ENCODE measurements at regions of chr20 and their contacts with region 1.

Region 1: DNA sequence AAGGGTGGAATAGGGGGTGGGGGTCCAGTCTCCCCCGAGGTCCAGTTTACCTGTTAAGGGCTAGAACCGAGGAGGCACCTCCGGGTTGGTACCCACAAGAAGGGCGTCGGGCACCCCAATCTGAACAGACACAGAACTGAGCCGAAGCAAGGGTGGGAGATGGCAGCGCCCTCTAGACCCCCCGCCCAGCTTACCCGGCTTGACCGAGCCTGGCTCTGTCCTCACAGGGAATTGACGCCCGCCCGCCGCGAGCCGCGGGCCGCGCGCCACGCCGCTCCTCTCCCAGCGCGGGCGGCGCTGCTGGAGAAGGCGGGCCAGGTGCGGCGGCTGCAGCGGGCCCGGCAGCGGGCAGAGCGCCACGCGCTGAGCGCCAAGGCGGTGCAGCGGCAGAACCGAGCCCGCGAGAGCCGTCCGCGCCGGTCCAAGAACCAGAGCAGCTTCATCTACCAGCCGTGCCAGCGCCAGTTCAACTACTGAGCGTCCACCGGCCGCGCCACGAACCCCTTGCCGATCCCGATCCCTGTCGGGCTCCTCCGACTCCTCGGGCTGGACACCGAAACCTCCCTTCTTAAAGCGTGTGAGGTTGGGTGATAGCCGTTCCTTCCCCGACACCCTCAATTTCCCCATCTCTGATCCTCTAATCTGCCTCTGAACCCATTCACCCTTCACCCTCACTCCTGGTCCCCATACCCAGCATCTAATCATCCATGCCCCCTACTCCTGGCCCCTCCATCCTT is 5.9 kb downstream of the TP53INP2 start:
- DNase-seq: peak; percentile 51
- ATAC-seq: peak; percentile 48
- H3K4me3 ChIP-seq: peak overlapping the region; percentile 57
- H3K27ac ChIP-seq: peak overlapping the region; percentile 24
- H3K4me1 ChIP-seq: peaks cover 22% of the 10 kb centered on the region
- H3K27me3 ChIP-seq: no peaks in the 10 kb centered on the region
- CTCF ChIP-seq: peak; percentile 33
- POLR2A ChIP-seq: no peak
- RAD21 ChIP-seq: no peak

Region 2: GRCh38 chr20:34302723-34303528 is 407.1 kb before region 1 on chr20 and contains the start of gene AHCY:
- CTCF ChIA-PET with region 1: no interaction called
- POLR2A ChIA-PET with region 1: no interaction called
- dilution Hi-C with region 1: no loop called
- in situ Hi-C with region 1: loop called (anchors 10 kb)
- intact Hi-C with region 1: no loop called
- DNase-seq: peak; percentile 95
- ATAC-seq: peak; percentile 95
- H3K4me3 ChIP-seq: peak within 1 kb of the TSS; percentile 76
- H3K27ac ChIP-seq: peak within 1 kb of the TSS; percentile 80
- H3K4me1 ChIP-seq: peaks cover 9% of the 10 kb centered on the region
- H3K27me3 ChIP-seq: no peaks in the 10 kb centered on the region
- CTCF ChIP-seq: no peak
- POLR2A ChIP-seq: no peak
- RAD21 ChIP-seq: no peak
- total RNA-seq, gene AHCY: 194 and 210 TPM in 2 replicates

Region 3: DNA sequence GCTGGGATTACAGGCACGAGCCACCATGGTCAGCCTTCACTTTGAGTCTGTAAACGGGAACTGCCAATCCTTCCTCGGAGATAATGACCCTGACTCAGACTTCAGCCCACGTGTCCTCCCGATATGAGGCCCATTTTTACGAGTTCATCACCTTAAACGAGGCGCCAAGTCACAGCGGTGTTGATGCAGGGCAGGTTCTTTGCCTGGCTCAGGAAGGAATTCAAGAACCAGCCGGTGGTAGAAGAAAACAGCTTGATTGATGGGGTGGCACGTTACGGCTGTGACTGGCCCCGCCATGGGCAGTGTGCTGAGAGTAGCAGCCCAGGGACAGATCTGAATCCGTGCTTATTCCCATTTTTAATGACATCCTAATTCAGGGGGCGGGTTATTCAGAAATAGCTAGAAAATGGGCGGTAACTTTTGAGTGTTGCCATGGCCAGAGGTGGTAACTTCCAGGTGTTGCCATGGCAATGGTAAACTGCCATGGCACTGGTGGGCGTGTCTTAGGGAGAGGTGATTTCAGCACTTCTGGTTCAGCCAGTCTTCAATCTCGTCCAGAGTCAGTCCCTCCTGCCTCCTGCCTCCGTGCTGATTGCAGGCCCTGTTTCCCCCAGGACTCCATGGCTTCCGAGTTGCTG is 160.6 kb before region 1 on chr20:
- CTCF ChIA-PET with region 1: no interaction called
- POLR2A ChIA-PET with region 1: no interaction called
- dilution Hi-C with region 1: no loop called
- in situ Hi-C with region 1: no loop called
- intact Hi-C with region 1: no loop called
- DNase-seq: peak; percentile 15
- ATAC-seq: no peak
- H3K4me3 ChIP-seq: no peak overlapping the region
- H3K27ac ChIP-seq: no peak overlapping the region
- H3K4me1 ChIP-seq: no peaks in the 10 kb centered on the region
- H3K27me3 ChIP-seq: no peaks in the 10 kb centered on the region
- CTCF ChIP-seq: no peak
- POLR2A ChIP-seq: no peak
- RAD21 ChIP-seq: no peak

Region 4: GRCh38 chr20:34579191-34579978 is 130.6 kb before region 1 on chr20:
- CTCF ChIA-PET with region 1: interaction called, 4 read pairs
- POLR2A ChIA-PET with region 1: no interaction called
- dilution Hi-C with region 1: no loop called
- in situ Hi-C with region 1: no loop called
- intact Hi-C with region 1: loop called (anchors 1 kb)
- DNase-seq: peak; percentile 82
- ATAC-seq: peak; percentile 89
- H3K4me3 ChIP-seq: no peak overlapping the region
- H3K27ac ChIP-seq: no peak overlapping the region
- H3K4me1 ChIP-seq: peaks cover 17% of the 10 kb centered on the region
- H3K27me3 ChIP-seq: no peaks in the 10 kb centered on the region
- CTCF ChIP-seq: peak; percentile 84
- POLR2A ChIP-seq: no peak
- RAD21 ChIP-seq: peak; percentile 89

Region 5: GRCh38 chr20:34654207-34654744 is 55.7 kb before region 1 on chr20:
- CTCF ChIA-PET with region 1: no interaction called
- POLR2A ChIA-PET with region 1: interaction called, 16 read pairs
- dilution Hi-C with region 1: no loop called
- in situ Hi-C with region 1: no loop called
- intact Hi-C with region 1: no loop called
- DNase-seq: no peak
- ATAC-seq: no peak
- H3K4me3 ChIP-seq: no peak overlapping the region
- H3K27ac ChIP-seq: no peak overlapping the region
- H3K4me1 ChIP-seq: no peaks in the 10 kb centered on the region
- H3K27me3 ChIP-seq: no peaks in the 10 kb centered on the region
- CTCF ChIP-seq: no peak
- POLR2A ChIP-seq: no peak
- RAD21 ChIP-seq: no peak

Region 6: GRCh38 chr20:35013421-35014411 is 303.7 kb after region 1 on chr20:
- CTCF ChIA-PET with region 1: no interaction called
- POLR2A ChIA-PET with region 1: no interaction called
- dilution Hi-C with region 1: no loop called
- in situ Hi-C with region 1: no loop called
- intact Hi-C with region 1: no loop called
- DNase-seq: no peak
- ATAC-seq: no peak
- H3K4me3 ChIP-seq: no peak overlapping the region
- H3K27ac ChIP-seq: no peak overlapping the region
- H3K4me1 ChIP-seq: peaks cover 9% of the 10 kb centered on the region
- H3K27me3 ChIP-seq: no peaks in the 10 kb centered on the region
- CTCF ChIP-seq: no peak
- POLR2A ChIP-seq: no peak
- RAD21 ChIP-seq: no peak